ENCODE measurements at regions of chr1 and their contacts with region 1.

Region 1: GRCh38 chr1:116724765-116725375 is 29.4 kb upstream of the CD2 start:
- DNase-seq: no peak
- ATAC-seq: peak; percentile 63
- H3K4me3 ChIP-seq: no peak overlapping the region
- H3K27ac ChIP-seq: no peak overlapping the region
- H3K4me1 ChIP-seq: no peaks in the 10 kb centered on the region
- H3K27me3 ChIP-seq: no peaks in the 10 kb centered on the region
- CTCF ChIP-seq: peak; percentile 82

Region 2: GRCh38 chr1:116624040-116624439 is 100.8 kb before region 1 on chr1:
- intact Hi-C with region 1: no loop called
- DNase-seq: no peak
- ATAC-seq: no peak
- H3K4me3 ChIP-seq: no peak overlapping the region
- H3K27ac ChIP-seq: no peak overlapping the region
- H3K4me1 ChIP-seq: no peaks in the 10 kb centered on the region
- H3K27me3 ChIP-seq: no peaks in the 10 kb centered on the region
- CTCF ChIP-seq: no peak

Region 3: DNA sequence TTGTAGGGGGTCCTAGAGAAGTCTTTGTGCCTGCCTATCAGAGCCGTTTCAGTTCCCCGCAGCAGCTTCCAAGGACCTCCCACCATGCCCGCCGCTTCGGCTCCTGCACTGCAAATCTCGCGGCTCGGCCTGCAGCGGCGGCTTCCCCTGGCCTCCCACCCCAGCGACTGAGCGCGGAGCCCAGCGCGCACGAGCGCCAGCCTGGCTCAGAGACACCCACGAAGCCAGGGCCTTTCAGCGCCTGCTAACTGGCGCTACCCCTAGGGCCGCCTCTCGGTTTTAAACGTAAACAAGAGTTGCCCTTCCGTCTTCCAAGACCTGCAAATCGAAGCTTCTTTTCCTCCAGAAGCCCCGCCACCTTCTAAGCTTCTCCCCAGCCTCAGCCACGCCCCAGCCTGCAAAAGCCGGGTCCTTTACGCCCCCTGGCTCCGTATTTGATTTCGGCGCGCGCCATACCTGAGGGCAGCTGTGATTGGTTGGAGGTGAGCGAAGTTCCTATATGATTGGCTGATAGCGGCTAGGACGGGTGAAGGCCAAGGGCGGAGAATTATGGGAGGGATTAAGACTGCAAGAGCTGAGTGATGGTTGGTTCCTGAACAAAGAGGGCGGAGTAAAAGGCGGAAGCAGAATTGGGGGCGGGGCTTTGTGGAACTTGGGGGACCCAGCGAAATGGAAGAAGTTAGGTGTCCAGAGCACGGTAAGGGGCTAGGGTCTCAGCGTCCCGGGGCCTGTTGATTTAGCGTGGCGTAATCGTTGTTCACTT is 335.0 kb after region 1 on chr1 and contains the start of gene TTF2:
- intact Hi-C with region 1: loop called (anchors 10 kb)
- DNase-seq: peak; percentile 93
- ATAC-seq: peak; percentile 99
- H3K4me3 ChIP-seq: peak within 1 kb of the TSS; percentile 84
- H3K27ac ChIP-seq: peak within 1 kb of the TSS; percentile 75
- H3K4me1 ChIP-seq: peaks cover 4% of the 10 kb centered on the region
- H3K27me3 ChIP-seq: no peaks in the 10 kb centered on the region
- CTCF ChIP-seq: peak; percentile 19
- total RNA-seq, gene TTF2: 14.8 TPM